ENCODE measurements at regions of chr1 and their contacts with region 1.

Region 1: DNA sequence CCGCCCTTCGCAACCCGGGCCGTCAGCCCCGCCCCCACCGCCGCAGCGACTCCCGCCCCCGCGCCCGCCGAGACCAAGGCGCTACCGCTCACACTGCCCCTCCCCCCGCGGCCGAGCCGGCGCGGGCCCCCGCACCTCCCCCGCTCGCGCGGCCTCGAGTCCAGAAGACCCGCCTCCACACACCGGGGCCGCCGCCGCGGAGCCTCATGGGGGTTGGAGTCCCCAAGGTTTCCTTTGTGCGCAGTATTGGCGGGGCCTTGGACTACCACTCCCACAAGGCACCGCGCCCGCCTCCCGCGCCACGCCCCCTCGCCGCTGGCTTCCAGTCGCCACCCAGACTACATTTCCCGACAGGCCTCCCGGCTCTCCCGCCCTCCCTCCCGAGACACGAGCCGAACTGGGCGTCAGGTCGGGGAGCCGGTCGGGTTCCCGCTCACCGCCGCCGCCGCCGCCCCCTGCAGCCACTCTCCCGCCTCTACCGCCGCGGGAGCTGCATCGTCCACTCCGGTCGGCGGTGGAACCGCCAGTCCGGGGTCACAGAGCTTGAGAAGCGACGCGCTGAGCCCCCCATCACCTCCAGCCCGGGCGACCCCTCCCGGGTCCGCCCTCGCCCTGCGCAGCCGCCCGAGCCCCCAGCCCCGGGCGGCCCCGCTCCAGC is at the start of gene PHF13:
- DNase-seq: peak; percentile 99 to 100
- H3K4me3 ChIP-seq: peak within 1 kb of the TSS; percentile 69 to 100 (median 96)
- H3K27ac ChIP-seq: peak within 1 kb of the TSS; percentile 93 to 95 (median 94)
- H3K4me1 ChIP-seq: peaks cover 8 to 25% of the 10 kb centered on the region in 2 donors
- H3K27me3 ChIP-seq: no peaks in the 10 kb centered on the region
- CTCF ChIP-seq: no peak
- POLR2A ChIP-seq: peak in 1 of 2 donors; percentile 75
- total RNA-seq, gene PHF13: 7.8 to 14.1 (median 9.5) TPM

Region 2: GRCh38 chr1:6601049-6601922 is 12.2 kb before region 1 on chr1:
- intact Hi-C with region 1: loop called (anchors 2 kb)
- DNase-seq: peak; percentile 80 to 87
- H3K4me3 ChIP-seq: peak overlapping the region; percentile 62 to 92 (median 91)
- H3K27ac ChIP-seq: peak overlapping the region; percentile 98 to 99 (median 99)
- H3K4me1 ChIP-seq: peaks cover 39 to 62% of the 10 kb centered on the region in 2 donors
- H3K27me3 ChIP-seq: no peaks in the 10 kb centered on the region
- CTCF ChIP-seq: no peak
- POLR2A ChIP-seq: peak; percentile 40 to 80

Measured in thyroid gland (tissue), 4 donors.